ENCODE measurements at regions of chr2 and their contacts with region 1.

Region 1: DNA sequence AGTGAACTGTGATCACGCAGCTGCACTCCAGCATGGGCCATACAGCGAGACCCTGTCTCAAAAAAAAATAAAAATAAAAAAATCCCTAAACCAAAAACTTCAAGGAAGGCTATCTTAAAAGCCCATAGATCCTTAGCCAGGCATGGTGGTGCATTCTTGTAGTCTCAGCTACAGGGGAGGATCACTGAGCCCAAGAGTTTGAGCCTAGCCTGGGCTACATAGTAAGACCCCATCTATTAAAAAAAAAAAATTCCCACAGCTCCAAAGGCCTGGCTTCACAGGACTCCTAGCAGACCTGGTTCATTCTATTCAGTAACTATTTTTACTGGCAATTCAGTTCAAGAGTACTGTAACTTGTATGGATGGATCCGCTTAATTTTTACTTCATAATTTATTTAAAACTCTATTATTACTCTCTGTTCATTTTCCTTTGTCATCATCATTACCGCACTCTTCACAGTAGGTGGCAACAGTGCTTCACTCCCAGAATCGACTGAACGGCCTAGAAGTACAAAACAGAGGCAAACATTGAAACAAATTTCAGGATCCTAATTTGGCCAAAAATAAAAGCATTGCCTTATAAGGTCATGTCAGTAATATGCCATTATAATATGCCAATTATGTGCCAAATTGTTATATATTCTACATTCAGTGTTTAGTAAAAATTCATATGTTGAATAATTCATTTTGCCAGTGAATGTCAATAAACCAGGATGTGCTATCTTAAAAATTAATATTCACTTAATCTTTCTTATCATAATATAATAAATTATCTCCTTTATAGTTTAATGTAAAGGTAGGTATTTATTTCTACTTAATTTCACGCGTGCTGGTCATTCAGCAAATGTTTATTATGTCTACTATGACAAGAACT is 14.3 kb upstream of the STAM2 start:
- DNase-seq: peak in 4 of 5 donors; percentile 36 to 59 (median 50)
- H3K4me3 ChIP-seq: no peak overlapping the region
- H3K27ac ChIP-seq: no peak overlapping the region
- H3K4me1 ChIP-seq: no peaks in the 10 kb centered on the region
- H3K27me3 ChIP-seq: no peaks in the 10 kb centered on the region
- CTCF ChIP-seq: peak; percentile 60 to 85 (median 83)
- EP300 ChIP-seq: no peak
- POLR2A ChIP-seq: no peak

Region 2: GRCh38 chr2:152627351-152627957 is 437.6 kb after region 1 on chr2:
- intact Hi-C with region 1: loop called in 2 of 4 experiments (anchors 1 to 2 kb)
- DNase-seq: no peak
- H3K4me3 ChIP-seq: no peak overlapping the region
- H3K27ac ChIP-seq: peak overlapping the region in 1 of 2 donors; percentile 10
- H3K4me1 ChIP-seq: peaks cover 3% of the 10 kb centered on the region
- H3K27me3 ChIP-seq: no peaks in the 10 kb centered on the region
- CTCF ChIP-seq: peak in 2 of 3 donors; percentile 60 to 63
- EP300 ChIP-seq: no peak
- POLR2A ChIP-seq: no peak

Region 3: DNA sequence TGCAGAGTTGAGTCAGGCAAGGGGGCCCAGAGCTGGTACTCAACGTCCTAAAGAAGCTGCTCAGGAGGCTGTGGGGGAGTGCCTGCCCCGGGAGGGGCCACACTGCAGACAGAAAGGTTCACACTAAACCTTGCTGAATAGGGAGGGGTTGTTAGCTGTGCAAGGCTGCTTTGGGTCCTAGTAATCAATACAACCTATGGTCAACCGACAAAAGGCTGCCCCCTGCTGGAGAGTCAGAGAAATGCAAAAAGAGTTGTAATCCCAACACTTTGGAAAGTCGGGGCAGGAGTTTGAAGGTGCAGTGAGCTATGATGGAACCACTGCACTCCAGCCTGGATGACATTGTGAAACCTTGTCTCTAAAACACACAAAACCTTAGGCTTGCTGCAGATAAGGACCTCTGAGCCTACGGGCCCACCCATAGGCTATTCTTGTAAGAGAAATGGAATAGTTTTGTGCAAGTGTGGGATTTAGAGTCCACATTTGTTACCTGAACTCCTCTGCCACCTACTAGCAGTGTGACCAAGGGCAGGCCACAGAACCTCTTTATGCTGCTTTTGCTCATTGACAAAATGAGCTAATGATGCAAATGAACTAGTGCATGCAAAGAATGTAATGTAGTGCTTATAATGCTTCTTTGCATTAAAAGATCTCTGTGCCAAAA is 445.9 kb after region 1 on chr2:
- intact Hi-C with region 1: loop called in 2 of 4 experiments (anchors 5 kb)
- DNase-seq: peak; percentile 34 to 65 (median 50)
- H3K4me3 ChIP-seq: no peak overlapping the region
- H3K27ac ChIP-seq: no peak overlapping the region
- H3K4me1 ChIP-seq: no peaks in the 10 kb centered on the region
- H3K27me3 ChIP-seq: no peaks in the 10 kb centered on the region
- CTCF ChIP-seq: peak; percentile 63 to 72 (median 67)
- EP300 ChIP-seq: no peak
- POLR2A ChIP-seq: no peak

Region 4: GRCh38 chr2:152740743-152741328 is 551.0 kb after region 1 on chr2:
- intact Hi-C with region 1: loop called in 1 of 4 experiments (anchors 5 kb)
- DNase-seq: no peak
- H3K4me3 ChIP-seq: no peak overlapping the region
- H3K27ac ChIP-seq: no peak overlapping the region
- H3K4me1 ChIP-seq: no peaks in the 10 kb centered on the region
- H3K27me3 ChIP-seq: no peaks in the 10 kb centered on the region
- CTCF ChIP-seq: peak; percentile 60 to 78 (median 70)
- EP300 ChIP-seq: no peak
- POLR2A ChIP-seq: no peak